IMR-90 (cell line): ENCODE measurements at regions of chr12 and their contacts with region 1.

Region 1: DNA sequence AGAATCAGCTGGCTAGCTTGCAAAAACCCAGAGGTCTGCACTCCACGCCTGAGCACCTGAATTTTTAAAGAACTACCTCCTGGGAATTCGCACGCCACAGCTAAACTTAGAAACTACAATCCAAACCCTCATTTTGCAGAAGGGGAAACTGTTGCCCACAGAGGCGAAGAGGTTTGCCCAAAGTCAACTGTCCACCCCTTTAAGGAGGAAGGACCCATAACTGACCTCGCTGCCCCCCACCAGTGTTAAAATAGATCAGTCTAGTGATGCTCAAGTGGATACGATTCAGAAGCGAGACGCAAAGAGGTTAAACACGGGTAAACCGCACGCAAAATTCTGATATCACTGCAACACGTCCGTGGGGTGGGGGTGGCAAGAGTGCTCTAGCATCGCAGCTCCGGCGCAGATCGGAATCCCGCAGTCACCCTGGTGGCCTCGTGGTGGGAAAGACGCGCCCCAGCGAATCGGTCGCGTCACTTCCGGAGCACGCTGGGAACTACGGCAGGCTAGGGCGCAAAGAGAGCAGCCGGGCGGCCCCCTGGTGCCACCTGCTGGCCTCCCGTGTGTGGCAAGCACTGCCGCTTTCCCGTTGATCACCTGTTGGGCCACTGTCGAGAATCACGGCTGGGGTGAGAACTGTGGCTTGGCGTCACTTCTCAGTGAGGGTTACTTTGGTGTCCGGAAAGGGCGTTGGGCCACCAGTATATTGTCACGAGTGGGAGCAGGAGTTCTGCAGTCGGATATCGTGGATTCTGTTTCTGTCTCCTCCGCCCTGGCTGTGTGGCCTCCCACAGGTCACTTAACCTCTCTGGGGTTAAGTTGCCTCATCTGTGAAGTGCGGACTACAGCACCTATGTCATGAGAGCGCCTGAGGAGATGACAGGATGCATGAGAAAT is at the start of gene ALKBH2:
- DNase-seq: peak; percentile 89
- ATAC-seq: peak; percentile 58
- H3K4me3 ChIP-seq: peak within 1 kb of the TSS; percentile 57
- H3K27ac ChIP-seq: peak within 1 kb of the TSS; percentile 43
- H3K4me1 ChIP-seq: peaks cover 7% of the 10 kb centered on the region
- H3K27me3 ChIP-seq: no peaks in the 10 kb centered on the region
- CTCF ChIP-seq: peak; percentile 99
- POLR2A ChIP-seq: peak; percentile 67
- RAD21 ChIP-seq: peak; percentile 96
- total RNA-seq, gene ALKBH2: 14.9 and 18.3 TPM in 2 replicates

Region 2: DNA sequence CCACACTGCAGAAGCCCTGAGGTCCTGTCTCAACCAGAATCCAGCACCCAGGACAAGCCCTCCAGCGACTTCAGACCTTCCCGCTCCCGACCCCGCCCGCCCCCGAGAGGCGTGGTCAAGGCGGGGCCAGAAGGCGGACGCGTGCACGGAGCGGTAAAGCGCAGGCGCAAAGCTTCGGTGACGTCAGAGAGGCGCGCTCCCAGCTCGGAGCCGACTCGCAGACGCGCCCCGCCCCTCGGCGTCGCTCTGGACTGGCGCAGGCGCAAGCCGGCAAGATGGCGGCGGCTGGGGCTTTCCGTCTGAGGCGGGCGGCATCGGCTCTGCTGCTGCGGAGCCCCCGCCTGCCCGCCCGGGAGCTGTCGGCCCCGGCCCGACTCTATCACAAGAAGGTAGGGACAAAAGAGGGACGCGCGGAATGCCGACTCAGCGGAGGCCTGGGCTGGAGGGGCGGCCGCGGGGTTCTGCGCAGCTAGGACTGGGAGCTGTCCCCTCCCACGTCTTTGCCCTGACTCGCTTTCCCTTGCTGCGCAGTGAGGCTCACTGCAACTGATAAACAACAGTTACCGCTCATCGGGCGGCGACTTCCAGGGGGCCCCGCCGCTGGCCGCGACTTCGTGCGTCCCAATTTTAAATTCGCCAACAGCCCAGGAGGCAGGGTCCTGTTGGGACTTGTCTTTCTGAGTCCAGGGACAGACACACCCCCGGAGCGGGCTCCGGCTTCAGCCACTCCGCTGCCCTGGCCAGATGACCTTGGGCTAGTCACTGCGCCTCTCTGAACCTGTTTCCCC is 530.7 kb before region 1 on chr12 and contains the start of gene ISCU:
- CTCF ChIA-PET with region 1: no interaction called
- POLR2A ChIA-PET with region 1: no interaction called
- dilution Hi-C with region 1: no loop called
- in situ Hi-C with region 1: loop called (anchors 5 kb)
- intact Hi-C with region 1: loop called (anchors 1 kb)
- DNase-seq: peak; percentile 95
- ATAC-seq: peak; percentile 86
- H3K4me3 ChIP-seq: peak within 1 kb of the TSS; percentile 92
- H3K27ac ChIP-seq: peak within 1 kb of the TSS; percentile 89
- H3K4me1 ChIP-seq: no peaks in the 10 kb centered on the region
- H3K27me3 ChIP-seq: no peaks in the 10 kb centered on the region
- CTCF ChIP-seq: no peak
- POLR2A ChIP-seq: peak; percentile 88
- RAD21 ChIP-seq: no peak
- total RNA-seq, gene ISCU: 52.7 and 58.3 TPM in 2 replicates

Region 3: DNA sequence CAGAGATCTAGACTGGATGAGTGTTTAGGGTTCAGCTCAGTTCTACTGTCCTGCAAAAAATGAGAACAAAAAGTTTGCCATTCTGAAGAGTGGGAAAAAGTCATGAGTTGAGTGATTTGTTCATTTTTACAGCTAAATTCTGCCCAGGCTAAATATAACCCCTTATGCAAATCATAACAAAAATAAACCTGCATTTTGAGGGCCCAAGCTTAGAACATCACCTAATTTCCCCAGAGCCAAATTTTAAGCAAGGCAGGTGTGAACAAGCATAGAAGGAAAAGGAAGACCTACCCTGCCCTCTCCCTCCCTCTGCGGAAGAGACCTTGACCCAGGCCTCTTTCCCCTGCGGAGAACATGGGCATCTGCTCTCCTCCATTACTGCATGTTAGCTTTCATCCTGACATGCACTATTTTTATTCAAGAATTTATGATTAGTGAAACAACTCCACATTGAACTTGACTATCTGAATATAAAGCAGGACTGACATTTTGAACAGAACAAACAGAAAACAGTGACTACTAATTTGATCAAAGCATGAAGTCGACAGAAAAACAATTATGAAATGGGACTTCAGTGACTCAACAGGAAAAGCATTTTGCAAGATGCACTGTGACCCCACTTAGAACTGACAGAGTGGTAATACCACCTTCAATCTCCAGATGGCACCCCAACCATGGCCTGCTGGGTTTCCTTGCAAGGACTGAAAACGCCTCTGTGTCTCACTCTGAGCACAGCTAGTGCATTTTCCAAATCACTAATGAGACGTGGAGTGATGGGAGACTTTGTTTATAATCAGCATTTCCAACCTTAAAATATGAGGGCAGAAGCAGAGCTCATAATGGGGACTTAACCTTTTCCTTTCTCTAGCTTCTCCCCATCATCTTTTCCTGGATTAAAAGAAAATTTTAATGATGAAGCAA is 428.7 kb before region 1 on chr12:
- CTCF ChIA-PET with region 1: interaction called, 3 read pairs
- POLR2A ChIA-PET with region 1: no interaction called
- dilution Hi-C with region 1: no loop called
- in situ Hi-C with region 1: no loop called
- intact Hi-C with region 1: loop called (anchors 10 kb)
- DNase-seq: peak; percentile 95
- ATAC-seq: peak; percentile 92
- H3K4me3 ChIP-seq: no peak overlapping the region
- H3K27ac ChIP-seq: peak overlapping the region; percentile 85
- H3K4me1 ChIP-seq: peaks cover 30% of the 10 kb centered on the region
- H3K27me3 ChIP-seq: no peaks in the 10 kb centered on the region
- CTCF ChIP-seq: peak; percentile 98
- POLR2A ChIP-seq: peak; percentile 31; the same call in 1 of the 2 replicates
- RAD21 ChIP-seq: peak; percentile 99

Region 4: DNA sequence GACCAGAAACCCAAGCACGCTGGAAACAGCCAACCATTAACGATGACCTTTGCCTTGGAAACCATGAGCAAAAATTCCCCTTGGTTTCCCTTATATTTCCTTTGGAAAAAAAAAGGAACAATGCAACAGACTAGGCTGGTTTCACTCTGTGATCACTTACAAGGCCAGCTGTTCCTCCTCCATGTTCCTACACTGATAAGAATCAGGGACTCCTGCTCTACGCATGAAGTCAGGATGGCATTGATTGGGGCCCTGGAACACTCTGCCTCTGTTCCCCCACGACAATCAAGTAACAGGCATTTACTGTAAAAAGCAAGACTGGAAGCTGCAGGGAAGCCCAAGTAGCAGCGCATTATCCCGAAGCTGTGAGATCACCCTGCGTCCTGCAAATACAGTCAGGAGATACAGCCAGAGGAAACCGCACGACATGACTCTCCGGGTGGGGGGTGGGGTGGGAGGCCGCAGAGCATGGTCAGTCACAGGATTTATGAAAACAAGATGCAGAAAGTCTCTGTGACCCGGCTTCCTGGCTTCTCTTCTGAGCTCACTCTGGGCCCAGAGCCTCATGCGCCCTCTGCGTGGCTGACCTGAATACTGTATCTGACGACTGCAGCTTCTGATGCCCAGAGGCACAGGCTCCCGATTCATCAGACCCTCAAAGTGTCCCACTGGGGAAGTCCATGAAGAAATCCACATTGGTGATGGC is 267.0 kb before region 1 on chr12:
- CTCF ChIA-PET with region 1: no interaction called
- POLR2A ChIA-PET with region 1: no interaction called
- dilution Hi-C with region 1: no loop called
- in situ Hi-C with region 1: no loop called
- intact Hi-C with region 1: loop called (anchors 1 kb)
- DNase-seq: peak; percentile 97
- ATAC-seq: peak; percentile 75
- H3K4me3 ChIP-seq: peak overlapping the region; percentile 26; the same call in 1 of the 2 replicates
- H3K27ac ChIP-seq: peak overlapping the region; percentile 99
- H3K4me1 ChIP-seq: peaks cover 34% of the 10 kb centered on the region
- H3K27me3 ChIP-seq: no peaks in the 10 kb centered on the region
- CTCF ChIP-seq: peak; percentile 27; the same call in 1 of the 2 replicates
- POLR2A ChIP-seq: peak; percentile 79
- RAD21 ChIP-seq: peak; percentile 30; the same call in 1 of the 2 replicates

Region 5: GRCh38 chr12:108950991-108951739 is 142.1 kb before region 1 on chr12:
- CTCF ChIA-PET with region 1: no interaction called
- POLR2A ChIA-PET with region 1: no interaction called
- dilution Hi-C with region 1: no loop called
- in situ Hi-C with region 1: no loop called
- intact Hi-C with region 1: loop called (anchors 10 kb)
- DNase-seq: peak; percentile 54
- ATAC-seq: peak; percentile 37
- H3K4me3 ChIP-seq: no peak overlapping the region
- H3K27ac ChIP-seq: no peak overlapping the region
- H3K4me1 ChIP-seq: 0 out of 2 replicates have a peak, but pooled peaks cover 1% of the 10 kb centered on the region
- H3K27me3 ChIP-seq: peaks cover 6% of the 10 kb centered on the region
- CTCF ChIP-seq: peak; percentile 78
- POLR2A ChIP-seq: no peak
- RAD21 ChIP-seq: peak; percentile 85